Right cardiac atrium (tissue), 5 donors: ENCODE measurements at regions of chr7 and their contacts with region 1.

Region 1: GRCh38 chr7:50610521-50611277 is 45.5 kb upstream of the DDC start:
- DNase-seq: no peak
- ATAC-seq: no peak
- H3K4me3 ChIP-seq: no peak overlapping the region
- H3K27ac ChIP-seq: no peak overlapping the region
- H3K4me1 ChIP-seq: no peaks in the 10 kb centered on the region
- H3K27me3 ChIP-seq: no peaks in the 10 kb centered on the region

Region 2: DNA sequence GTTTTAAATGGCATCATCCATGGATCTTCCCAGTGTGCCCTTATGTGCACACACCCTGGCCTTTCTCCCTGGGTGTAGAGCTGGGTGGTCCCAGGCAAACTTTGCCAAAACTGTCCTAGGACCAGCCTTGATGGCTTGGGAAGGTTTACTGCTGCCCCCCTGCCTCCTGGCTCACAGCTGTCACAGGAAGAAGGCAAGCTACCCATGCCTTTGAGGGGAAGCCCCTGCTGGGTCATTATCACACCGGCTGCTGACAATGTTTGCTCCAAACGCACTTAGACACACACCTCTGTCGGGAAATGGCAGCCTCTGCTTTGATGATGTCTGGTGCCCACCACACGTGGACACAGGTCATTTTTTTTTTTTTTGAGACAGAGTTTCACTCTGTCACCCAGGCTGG is 135.4 kb before region 1 on chr7:
- intact Hi-C with region 1: loop called in 1 of 4 experiments (anchors 10 kb)
- DNase-seq: no peak
- ATAC-seq: no peak
- H3K4me3 ChIP-seq: no peak overlapping the region
- H3K27ac ChIP-seq: no peak overlapping the region
- H3K4me1 ChIP-seq: no peaks in the 10 kb centered on the region
- H3K27me3 ChIP-seq: no peaks in the 10 kb centered on the region

Region 3: GRCh38 chr7:50679218-50680007 is 68.7 kb after region 1 on chr7:
- intact Hi-C with region 1: loop called in 2 of 4 experiments (anchors 10 kb)
- DNase-seq: no peak
- ATAC-seq: peak; percentile 62 to 67
- H3K4me3 ChIP-seq: no peak overlapping the region
- H3K27ac ChIP-seq: peak overlapping the region; percentile 61
- H3K4me1 ChIP-seq: peaks cover 15% of the 10 kb centered on the region
- H3K27me3 ChIP-seq: no peaks in the 10 kb centered on the region

Region 4: DNA sequence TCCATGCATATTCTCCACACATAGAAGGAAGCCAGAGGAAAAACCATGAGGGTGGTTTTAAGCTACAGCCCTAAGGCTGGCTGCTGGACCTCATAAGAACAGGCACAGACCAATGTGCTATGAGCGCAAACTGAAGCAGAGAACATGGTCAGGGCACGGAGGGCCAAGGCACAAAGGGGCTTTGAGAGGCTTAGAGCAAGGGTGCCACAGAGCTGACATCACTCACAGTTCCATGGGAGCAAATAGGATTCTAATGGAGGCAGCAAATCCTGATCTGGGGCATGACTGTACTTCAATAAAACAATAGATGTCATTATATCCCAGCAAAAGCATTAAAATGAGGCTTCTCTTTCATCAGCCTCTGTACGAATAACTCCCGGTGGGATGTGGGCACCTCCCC is 543.5 kb after region 1 on chr7:
- intact Hi-C with region 1: loop called in 3 of 4 experiments (anchors 10 kb)
- DNase-seq: no peak
- ATAC-seq: peak; percentile 26 to 54
- H3K4me3 ChIP-seq: no peak overlapping the region
- H3K27ac ChIP-seq: no peak overlapping the region
- H3K4me1 ChIP-seq: no peaks in the 10 kb centered on the region
- H3K27me3 ChIP-seq: no peaks in the 10 kb centered on the region